Naive thymus-derived CD8-positive, alpha-beta T cell (primary cell): ENCODE measurements at regions of chr17 and their contacts with region 1.

Region 1: GRCh38 chr17:46212634-46213435 is 19.6 kb upstream of the KANSL1 start:
- DNase-seq: peak; percentile 26 to 84 (median 70)
- ATAC-seq: peak; percentile 92 to 94
- H3K4me3 Mint-ChIP-seq: peak overlapping the region in 4 of 10 donors; percentile 0 to 37 (median 3)
- H3K27ac Mint-ChIP-seq: peak overlapping the region; percentile 30 to 93 (median 72)
- H3K4me1 Mint-ChIP-seq: peaks cover 15 to 50% (median 38%) of the 10 kb centered on the region in 4 donors
- H3K27me3 Mint-ChIP-seq: no peaks in the 10 kb centered on the region

Region 2: DNA sequence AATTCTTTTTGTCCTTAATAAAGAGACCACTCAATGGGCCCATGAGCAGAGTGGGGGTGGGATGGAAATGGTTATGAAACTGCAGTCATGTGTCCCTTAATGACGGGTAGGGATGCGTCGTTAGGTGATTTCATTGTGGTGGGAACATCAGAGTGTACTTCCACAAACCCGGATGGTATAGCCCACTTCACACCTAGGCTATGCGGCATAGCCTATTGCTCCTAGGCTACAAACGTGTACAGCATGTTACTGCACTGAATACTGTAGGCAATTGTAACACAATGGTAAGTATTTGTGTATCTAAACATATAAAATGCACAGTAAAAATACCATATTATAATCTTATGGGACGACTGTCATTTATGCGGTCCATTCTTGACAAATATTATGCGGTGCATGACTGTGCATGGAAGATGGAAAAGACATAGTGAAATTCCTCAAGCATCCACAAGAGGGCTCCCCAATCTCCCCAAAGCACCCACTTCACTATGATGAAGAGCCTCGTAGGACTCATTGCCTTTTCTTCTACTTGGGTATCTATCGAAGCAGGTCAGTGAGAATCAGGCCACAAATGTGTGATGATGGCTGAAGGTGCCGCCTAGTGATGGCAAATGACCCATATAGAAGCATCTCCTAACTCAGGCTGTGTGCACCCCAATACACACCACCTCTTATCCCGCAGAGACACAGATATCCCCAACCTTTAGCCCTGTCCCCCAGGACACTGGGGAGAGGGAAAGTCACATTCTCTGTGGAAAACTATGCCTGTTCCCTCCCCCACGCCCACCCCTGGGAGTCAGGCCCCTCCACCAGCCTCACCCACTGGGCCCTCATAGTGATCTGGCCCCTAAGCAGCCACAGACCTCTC is 1563.7 kb after region 1 on chr17:
- POLR2A ChIA-PET with region 1: interaction called, 10 read pairs
- DNase-seq: peak in 7 of 10 donors; percentile 15 to 58 (median 36)
- ATAC-seq: peak; percentile 77 to 83
- H3K4me3 Mint-ChIP-seq: no peak overlapping the region
- H3K27ac Mint-ChIP-seq: peak overlapping the region in 1 of 10 donors; percentile 34
- H3K4me1 Mint-ChIP-seq: peaks cover 0 to 2% (median under 1%) of the 10 kb centered on the region in 4 donors
- H3K27me3 Mint-ChIP-seq: peaks cover 24 to 61% (median 40%) of the 10 kb centered on the region in 5 donors